ENCODE measurements at regions of chr4 and their contacts with region 1.

Region 1: DNA sequence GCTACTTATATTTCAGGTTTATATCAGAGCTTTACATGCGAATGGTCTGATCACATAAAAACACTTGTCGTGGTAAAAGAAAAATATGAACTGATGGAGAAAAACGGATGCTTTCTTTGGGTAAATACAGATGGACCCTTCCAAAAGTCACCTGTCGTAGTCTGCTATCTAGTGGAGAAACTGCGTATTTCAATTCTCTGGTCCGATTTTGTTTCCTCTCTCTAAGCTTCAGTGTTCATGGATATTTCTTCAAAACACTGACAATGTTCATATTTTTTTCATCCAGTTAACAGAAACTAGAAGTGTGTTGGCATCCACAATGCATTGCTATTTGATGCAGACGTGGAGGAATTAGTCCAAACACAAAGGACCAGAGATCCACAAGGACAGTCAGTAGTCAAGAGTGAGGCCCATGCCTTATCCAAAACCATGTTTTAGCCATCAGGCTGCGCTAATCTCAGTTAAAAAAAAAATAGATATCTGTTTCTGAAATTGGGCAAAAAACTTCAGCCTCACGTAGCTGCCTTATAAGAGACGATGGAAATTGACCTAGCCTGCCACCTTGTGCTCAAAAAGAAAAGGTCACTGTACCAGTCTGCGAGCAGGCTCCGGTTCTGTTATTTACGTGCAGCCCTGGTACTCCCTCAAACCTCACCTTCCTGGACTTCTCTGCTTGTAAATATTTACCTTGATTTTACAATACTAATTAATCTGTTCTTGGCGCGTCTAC is 16.0 kb downstream of the MEPE start:
- DNase-seq: peak; percentile 55
- ATAC-seq: peak; percentile 90
- H3K4me3 ChIP-seq: peak overlapping the region; percentile 62
- H3K27ac ChIP-seq: no peak overlapping the region
- H3K4me1 ChIP-seq: peaks cover 12% of the 10 kb centered on the region
- H3K27me3 ChIP-seq: no peaks in the 10 kb centered on the region
- CTCF ChIP-seq: peak; percentile 66; the same call in 1 of the 2 replicates

Region 2: DNA sequence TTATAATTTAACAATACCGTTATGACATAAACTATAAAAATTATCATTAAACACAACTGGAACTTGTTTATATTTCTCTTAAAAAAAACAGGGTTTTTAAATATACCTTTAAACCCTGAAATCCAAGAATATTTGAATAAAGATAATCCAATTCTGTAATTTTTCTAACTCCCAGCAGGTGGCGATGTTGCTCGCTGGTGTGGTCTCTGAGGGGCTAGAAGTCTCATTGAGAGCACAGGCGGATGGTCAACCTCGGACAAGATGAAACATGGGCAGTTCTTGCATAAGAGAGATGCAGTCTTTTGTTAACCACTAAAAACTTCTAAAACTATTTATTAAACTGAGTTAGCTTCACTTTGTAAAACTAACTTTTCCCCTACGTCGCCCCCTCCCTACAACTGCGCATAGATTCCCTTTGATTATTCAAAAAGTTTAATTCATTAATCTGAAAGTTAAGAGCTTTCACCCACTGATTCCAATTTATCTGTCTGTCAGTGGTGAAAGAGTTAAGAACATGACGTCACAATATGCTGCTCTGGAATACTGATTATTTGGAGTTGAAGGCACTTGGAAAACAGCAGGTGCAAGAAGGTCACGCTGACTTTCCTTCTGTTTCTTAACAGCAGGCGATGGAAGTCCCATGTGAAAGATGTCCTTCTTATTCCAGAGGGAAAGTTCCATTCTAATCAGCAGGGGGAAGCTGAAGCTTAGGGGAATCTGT is 169.2 kb before region 1 on chr4:
- CTCF ChIA-PET with region 1: no interaction called
- POLR2A ChIA-PET with region 1: no interaction called
- intact Hi-C with region 1: loop called (anchors 1 kb)
- DNase-seq: peak; percentile 53
- ATAC-seq: no peak
- H3K4me3 ChIP-seq: no peak overlapping the region
- H3K27ac ChIP-seq: no peak overlapping the region
- H3K4me1 ChIP-seq: no peaks in the 10 kb centered on the region
- H3K27me3 ChIP-seq: no peaks in the 10 kb centered on the region
- CTCF ChIP-seq: peak; percentile 80

Region 3: GRCh38 chr4:87807402-87807801 is 41.4 kb before region 1 on chr4:
- CTCF ChIA-PET with region 1: no interaction called
- POLR2A ChIA-PET with region 1: no interaction called
- intact Hi-C with region 1: no loop called
- DNase-seq: peak; percentile 11
- ATAC-seq: no peak
- H3K4me3 ChIP-seq: no peak overlapping the region
- H3K27ac ChIP-seq: no peak overlapping the region
- H3K4me1 ChIP-seq: peaks cover 10% of the 10 kb centered on the region
- H3K27me3 ChIP-seq: no peaks in the 10 kb centered on the region
- CTCF ChIP-seq: no peak

Region 4: GRCh38 chr4:87973283-87974169 is 124.7 kb after region 1 on chr4:
- CTCF ChIA-PET with region 1: interaction called, 6 read pairs
- POLR2A ChIA-PET with region 1: no interaction called
- intact Hi-C with region 1: loop called (anchors 1 kb)
- DNase-seq: peak; percentile 70
- ATAC-seq: peak; percentile 60; the same call in 1 of the 2 replicates
- H3K4me3 ChIP-seq: no peak overlapping the region
- H3K27ac ChIP-seq: no peak overlapping the region
- H3K4me1 ChIP-seq: peaks cover 14% of the 10 kb centered on the region; the same call in 1 of the 2 replicates
- H3K27me3 ChIP-seq: no peaks in the 10 kb centered on the region
- CTCF ChIP-seq: peak; percentile 74

Region 5: GRCh38 chr4:87985097-87985886 is 136.5 kb after region 1 on chr4:
- CTCF ChIA-PET with region 1: interaction called, 6 read pairs
- POLR2A ChIA-PET with region 1: no interaction called
- intact Hi-C with region 1: loop called (anchors 5 kb)
- DNase-seq: peak; percentile 74
- ATAC-seq: peak; percentile 99
- H3K4me3 ChIP-seq: no peak overlapping the region
- H3K27ac ChIP-seq: no peak overlapping the region
- H3K4me1 ChIP-seq: no peaks in the 10 kb centered on the region
- H3K27me3 ChIP-seq: no peaks in the 10 kb centered on the region
- CTCF ChIP-seq: peak; percentile 74

Region 6: DNA sequence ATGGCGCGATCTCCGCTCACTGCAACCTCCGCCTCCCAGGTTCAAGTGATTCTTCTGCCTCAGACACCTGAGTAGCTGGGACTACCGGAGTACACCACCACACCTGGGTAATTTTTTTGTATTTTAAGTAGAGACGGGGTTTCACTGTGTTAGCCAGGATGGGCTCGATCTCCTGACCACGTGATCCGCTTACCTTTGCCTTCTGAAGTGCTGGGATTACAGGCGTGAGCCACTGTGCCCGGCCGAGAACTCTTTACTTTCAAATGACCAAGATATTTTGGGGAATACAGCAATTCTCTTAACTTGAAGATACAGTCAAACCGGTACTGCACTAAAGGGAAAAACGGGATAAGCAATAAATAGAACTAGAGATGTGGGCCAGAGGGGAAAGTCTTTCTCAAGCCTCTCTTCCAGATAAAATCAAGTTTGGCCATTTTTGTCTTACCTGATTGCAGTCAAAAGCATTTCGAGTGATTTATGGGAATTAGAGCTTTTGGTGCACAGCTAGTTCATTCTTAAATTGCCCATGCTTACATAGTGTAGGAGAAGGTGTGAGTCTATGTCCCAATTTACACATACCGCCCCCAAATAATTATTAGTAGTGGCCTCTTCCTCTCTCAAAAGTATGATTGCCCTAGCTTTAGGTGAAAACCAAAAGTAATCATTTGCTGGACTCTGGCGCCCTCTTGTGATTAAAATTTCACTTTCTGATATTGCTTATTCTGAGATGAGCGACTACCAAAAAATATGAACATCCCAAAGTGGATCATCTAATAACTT is 362.9 kb after region 1 on chr4:
- CTCF ChIA-PET with region 1: no interaction called
- POLR2A ChIA-PET with region 1: no interaction called
- intact Hi-C with region 1: loop called (anchors 1 kb)
- DNase-seq: peak; percentile 81
- ATAC-seq: peak; percentile 64
- H3K4me3 ChIP-seq: no peak overlapping the region
- H3K27ac ChIP-seq: no peak overlapping the region
- H3K4me1 ChIP-seq: no peaks in the 10 kb centered on the region; the same call in 1 of the 2 replicates
- H3K27me3 ChIP-seq: no peaks in the 10 kb centered on the region
- CTCF ChIP-seq: peak; percentile 76

Measured in PC-3 (cell line).